Activated T-helper 2 cell treated with anti-CD3 and anti-CD28 coated beads, Interferon-gamma antibody, Interleukin-2, Interleukin-4, amounts not matched to agents 10 μg/mL and 5 μg/mL and 100 μg/mL, durations not matched to agents 14 hours and 24 hours and 36 hours (primary cell): ENCODE measurements at regions of chr1 and their contacts with region 1.

Region 1: DNA sequence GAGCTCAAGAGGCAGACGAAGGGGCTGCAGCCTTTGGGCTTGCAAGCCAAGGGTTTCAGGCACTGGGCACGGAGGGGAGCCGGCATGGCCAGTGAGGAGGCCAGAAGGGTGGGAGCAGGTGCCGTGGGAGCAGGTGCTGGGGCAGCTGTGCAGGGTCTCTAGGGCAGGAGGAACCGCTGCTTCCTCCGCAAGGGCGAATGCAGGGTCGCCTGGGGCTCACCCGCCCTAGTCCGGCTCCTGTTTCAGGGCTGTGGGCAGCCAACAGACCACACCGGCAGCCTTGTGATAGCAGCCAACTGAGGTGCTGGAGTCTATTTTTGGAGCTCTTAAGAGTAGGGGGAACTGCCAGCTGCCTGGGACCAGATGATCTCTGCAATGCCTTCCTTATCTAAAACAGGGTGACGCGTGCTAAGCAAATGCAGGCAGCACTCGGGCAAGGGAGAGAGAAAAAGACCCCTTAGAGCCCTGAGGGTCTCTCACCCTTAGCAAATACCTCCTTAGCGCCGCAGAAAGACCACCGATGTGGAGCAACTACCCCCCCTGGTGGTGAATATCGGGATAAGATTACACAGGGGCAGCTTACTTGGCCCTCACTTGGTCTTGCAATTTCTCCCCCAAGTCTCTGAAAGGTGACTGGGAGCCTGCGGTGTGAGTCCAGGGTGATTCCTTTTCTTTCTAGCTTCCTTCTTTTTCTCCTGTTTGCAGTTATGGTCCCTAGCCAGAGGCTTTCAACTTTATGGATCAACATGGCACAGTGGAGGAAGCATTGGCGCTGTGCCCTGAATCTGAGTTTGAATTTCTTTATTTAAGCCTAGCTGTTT is 20.7 kb upstream of the MAPKAPK2 start:
- DNase-seq: peak; percentile 54
- H3K4me3 Mint-ChIP-seq: no peak overlapping the region
- H3K27ac Mint-ChIP-seq: no peak overlapping the region
- H3K4me1 Mint-ChIP-seq: peaks cover 28% of the 10 kb centered on the region
- H3K27me3 Mint-ChIP-seq: peaks cover 16% of the 10 kb centered on the region

Region 2: DNA sequence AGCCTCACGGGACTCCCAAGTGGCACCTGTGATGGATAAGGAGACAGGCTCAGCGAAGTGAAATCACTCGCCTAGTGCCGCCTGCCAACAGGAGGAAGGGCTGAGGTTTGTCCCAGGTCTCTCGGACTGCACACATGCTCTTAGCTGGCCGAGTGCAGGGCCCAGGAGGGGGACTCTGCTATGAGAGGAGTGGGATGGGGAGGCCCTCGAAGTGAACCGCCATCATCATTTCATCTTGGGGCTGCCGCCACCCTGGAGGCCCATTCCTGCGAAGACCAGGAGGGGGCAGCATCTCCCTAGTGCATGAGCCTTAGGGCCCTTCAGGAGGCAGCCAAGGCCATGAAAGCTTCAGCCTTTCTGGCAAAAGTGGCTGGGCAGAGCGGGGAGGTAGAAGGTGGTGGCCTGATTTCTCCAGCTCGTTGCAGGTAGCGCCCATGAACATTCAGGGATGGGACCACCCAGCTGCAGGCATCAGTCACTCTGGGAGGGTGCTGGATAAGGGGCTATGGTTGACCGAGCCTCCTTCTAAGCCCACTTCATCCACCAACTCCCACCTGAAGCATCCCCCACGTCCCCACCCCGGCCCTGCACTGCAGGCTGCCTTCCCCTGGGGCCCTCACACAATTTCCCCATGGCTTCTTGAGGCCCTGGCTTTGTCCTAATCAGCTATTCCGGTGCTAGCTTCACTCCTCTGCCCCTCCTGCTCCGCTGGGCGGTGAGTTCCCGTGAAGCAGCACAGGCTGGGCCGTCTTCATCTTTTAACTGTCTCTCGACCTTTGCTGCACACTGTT is 173.9 kb before region 1 on chr1:
- intact Hi-C with region 1: loop called (anchors 5 kb)
- DNase-seq: peak; percentile 56
- H3K4me3 Mint-ChIP-seq: no peak overlapping the region
- H3K27ac Mint-ChIP-seq: no peak overlapping the region
- H3K4me1 Mint-ChIP-seq: peaks cover 7% of the 10 kb centered on the region
- H3K27me3 Mint-ChIP-seq: no peaks in the 10 kb centered on the region

Region 3: GRCh38 chr1:206507284-206508129 is 156.5 kb before region 1 on chr1 and contains the start of gene RASSF5:
- intact Hi-C with region 1: loop called (anchors 5 kb)
- DNase-seq: peak; percentile 74
- H3K4me3 Mint-ChIP-seq: peak within 1 kb of the TSS; percentile 75
- H3K27ac Mint-ChIP-seq: no peak within 1 kb of the TSS
- H3K4me1 Mint-ChIP-seq: peaks cover 30% of the 10 kb centered on the region
- H3K27me3 Mint-ChIP-seq: peaks cover 18% of the 10 kb centered on the region
- total RNA-seq, gene RASSF5: 180 and 182 TPM in 2 replicates

Region 4: DNA sequence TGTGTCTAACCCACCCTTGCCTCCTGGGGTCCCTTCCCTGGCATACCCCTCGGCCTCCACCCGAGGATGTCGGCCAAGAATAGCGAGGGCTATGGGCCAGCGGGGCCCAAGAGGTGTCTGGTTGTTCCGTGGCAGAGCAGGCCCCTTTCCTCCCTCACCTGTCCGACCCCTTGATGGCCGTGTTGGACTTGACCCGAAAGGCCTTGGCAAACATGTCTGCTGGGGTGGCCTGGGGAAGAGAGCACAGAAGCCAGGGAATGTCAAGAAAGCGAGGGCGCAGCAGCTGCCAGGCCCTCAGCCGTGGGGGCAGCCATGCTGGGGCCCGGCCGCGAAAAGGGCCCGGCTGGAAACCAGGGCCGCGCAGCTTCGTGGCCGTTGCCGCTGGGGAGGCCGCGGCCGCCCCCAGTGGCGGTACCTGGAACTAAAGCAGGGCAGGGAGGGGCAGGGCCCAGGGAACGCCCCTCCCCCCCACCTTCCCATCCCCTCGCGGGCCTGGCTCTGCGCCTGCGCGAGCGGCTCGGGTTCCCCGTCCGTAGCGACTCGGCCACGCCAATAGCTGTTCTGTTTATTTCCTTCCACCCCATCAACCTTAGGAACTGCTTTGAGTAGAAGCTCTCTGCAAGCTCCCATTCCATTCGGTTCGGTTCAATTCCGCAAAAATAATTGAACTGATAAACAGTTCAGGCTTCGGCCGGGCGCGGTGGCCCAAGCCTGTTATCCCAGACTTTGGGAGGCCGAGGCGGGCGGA is 51.7 kb before region 1 on chr1 and contains the start of gene EIF2D:
- intact Hi-C with region 1: loop called (anchors 1 kb)
- DNase-seq: peak; percentile 91
- H3K4me3 Mint-ChIP-seq: peak within 1 kb of the TSS; percentile 92
- H3K27ac Mint-ChIP-seq: peak within 1 kb of the TSS; percentile 84
- H3K4me1 Mint-ChIP-seq: peaks cover 30% of the 10 kb centered on the region
- H3K27me3 Mint-ChIP-seq: peaks cover 7% of the 10 kb centered on the region
- total RNA-seq, gene EIF2D: 72.7 and 73.3 TPM in 2 replicates

Region 5: DNA sequence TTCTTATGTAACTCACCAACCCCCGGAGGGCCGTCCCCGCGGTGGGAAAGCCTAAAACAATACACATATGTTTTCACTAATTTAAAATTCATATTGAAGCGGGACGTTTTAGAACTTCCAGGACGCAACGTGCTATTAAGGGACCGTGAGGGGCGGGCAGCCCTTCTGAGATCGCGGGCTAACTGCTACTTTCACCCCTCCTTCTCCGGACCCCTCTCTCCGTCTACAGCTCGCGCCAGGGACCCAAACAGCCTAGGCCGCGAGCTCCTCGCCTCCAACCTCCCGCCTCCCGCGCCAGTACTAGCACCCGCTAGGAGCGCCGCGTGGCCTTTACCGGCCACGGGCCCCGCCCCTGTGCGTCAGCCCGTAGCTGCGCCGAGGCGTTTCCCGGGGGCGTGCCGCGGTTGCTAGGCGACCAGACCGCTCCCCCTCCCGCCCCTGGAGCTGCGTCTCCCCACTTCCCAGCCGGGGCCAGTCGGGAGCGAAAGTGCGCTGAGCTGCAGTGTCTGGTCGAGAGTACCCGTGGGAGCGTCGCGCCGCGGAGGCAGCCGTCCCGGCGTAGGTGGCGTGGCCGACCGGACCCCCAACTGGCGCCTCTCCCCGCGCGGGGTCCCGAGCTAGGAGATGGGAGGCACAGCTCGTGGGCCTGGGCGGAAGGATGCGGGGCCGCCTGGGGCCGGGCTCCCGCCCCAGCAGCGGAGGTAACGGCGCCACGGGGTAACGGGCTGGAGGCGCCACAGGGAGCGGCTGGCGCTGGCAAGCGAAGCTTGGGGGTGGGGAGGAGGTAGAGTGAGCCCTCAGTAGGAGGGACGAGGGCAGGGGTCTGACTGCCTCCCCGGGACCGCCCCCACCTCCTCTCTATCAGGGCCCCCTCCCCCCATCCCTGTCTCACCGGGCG is 28.7 kb before region 1 on chr1 and contains the start of gene DYRK3:
- intact Hi-C with region 1: loop called (anchors 1 kb)
- DNase-seq: peak; percentile 93
- H3K4me3 Mint-ChIP-seq: peak within 1 kb of the TSS; percentile 85
- H3K27ac Mint-ChIP-seq: peak within 1 kb of the TSS; percentile 95
- H3K4me1 Mint-ChIP-seq: peaks cover 23% of the 10 kb centered on the region
- H3K27me3 Mint-ChIP-seq: peaks cover 14% of the 10 kb centered on the region
- total RNA-seq, gene DYRK3: 12.1 and 13.0 TPM in 2 replicates

Region 6: GRCh38 chr1:206651958-206652890 is 11.8 kb before region 1 on chr1:
- intact Hi-C with region 1: no loop called
- DNase-seq: no peak
- H3K4me3 Mint-ChIP-seq: no peak overlapping the region
- H3K27ac Mint-ChIP-seq: no peak overlapping the region
- H3K4me1 Mint-ChIP-seq: no peaks in the 10 kb centered on the region
- H3K27me3 Mint-ChIP-seq: no peaks in the 10 kb centered on the region

Region 7: DNA sequence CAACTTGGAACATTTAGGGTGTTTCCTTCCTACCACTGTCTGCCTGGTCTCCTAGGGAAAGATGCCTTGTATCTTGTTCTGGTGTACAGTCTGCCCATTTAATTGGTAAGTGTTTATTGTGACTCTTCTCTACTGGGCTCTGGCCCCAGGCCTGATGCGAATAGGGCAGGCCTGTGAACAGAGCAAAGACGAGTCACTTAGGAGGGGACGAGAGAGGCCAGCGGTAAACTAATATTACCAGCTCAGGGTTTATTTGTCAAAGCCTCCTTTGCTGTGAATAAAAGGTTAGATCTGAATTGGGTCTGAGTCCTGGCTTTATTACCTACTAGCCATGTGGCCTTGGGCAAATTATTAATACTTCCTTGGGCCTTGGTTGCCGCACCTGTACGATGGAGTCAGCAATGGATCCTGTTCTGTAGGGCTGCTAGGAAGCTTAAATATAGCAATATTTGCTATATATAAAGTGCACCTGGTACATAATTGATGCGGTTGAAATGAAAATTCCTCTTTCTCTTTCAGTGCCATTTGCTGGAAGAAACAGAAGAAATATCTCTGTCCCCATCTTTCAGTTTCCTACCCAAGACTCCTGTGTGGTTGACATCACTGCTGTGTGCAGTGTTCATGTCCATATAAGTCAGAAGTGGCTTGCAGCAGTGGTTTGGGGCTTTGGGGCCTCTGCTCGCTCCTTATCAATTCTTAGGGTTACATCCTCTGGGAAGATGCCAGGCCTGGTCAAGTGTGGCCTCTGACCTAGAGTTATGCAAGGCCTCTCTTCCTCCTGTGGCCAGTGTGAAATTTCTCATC is 53.0 kb after region 1 on chr1:
- intact Hi-C with region 1: loop called (anchors 10 kb)
- DNase-seq: peak; percentile 39
- H3K4me3 Mint-ChIP-seq: peak overlapping the region; percentile 52
- H3K27ac Mint-ChIP-seq: peak overlapping the region; percentile 83
- H3K4me1 Mint-ChIP-seq: peaks cover 74% of the 10 kb centered on the region
- H3K27me3 Mint-ChIP-seq: no peaks in the 10 kb centered on the region

Region 8: GRCh38 chr1:206895830-206896242 is 231.8 kb after region 1 on chr1:
- intact Hi-C with region 1: no loop called
- DNase-seq: no peak
- H3K4me3 Mint-ChIP-seq: no peak overlapping the region
- H3K27ac Mint-ChIP-seq: no peak overlapping the region
- H3K4me1 Mint-ChIP-seq: peaks cover 56% of the 10 kb centered on the region
- H3K27me3 Mint-ChIP-seq: no peaks in the 10 kb centered on the region